RWPE1 (cell line): ENCODE measurements at regions of chr16 and their contacts with region 1.

Region 1: DNA sequence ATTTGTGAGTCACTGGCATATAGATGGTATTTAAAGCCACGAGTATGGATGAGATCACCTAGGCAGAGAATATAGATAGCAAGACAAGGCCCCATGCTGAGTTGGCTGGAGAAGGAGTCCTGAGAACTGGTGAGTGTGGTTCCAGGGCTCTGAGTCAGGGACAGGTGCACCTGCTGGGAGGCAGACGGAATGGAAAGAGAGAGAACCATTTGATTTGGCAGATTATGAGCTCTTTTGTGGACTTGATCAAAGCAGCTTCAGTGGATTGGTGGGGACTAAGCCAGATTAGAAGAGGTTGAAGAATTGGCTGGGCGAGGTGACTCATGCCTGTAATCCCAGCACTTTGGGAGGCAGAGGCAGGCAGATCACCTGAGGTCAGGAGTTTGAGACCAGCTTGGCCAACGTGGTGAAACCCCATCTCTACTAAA is 4.3 kb upstream of the C16orf92 start:
- DNase-seq: no peak
- H3K27ac ChIP-seq: no peak overlapping the region
- CTCF ChIP-seq: no peak

Region 2: DNA sequence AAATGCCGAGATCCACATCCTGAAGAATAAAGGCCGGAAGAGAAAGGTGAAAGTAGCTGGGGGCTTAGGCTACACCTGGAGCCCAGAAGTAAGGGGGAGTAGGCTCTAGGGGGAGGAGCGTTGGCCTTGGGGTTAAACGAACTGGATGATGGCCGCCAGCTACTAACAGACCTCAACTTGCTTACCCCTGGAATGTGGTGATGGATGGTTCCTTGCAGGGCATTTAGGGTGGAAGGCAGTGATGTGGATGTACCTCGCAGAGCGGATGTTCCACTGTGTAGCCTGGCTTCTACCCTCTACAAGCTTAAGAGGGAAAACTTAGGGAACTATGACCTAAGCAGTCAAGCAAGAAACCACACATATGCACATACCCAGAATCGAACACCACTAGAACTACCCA is 214.7 kb before region 1 on chr16:
- CTCF ChIA-PET with region 1: no interaction called
- POLR2A ChIA-PET with region 1: no interaction called
- DNase-seq: no peak
- H3K27ac ChIP-seq: peak overlapping the region; percentile 99
- CTCF ChIP-seq: no peak

Region 3: GRCh38 chr16:30005341-30006094 is 13.2 kb before region 1 on chr16:
- CTCF ChIA-PET with region 1: interaction called, 17 read pairs
- POLR2A ChIA-PET with region 1: no interaction called
- DNase-seq: peak; percentile 47
- H3K27ac ChIP-seq: peak overlapping the region; percentile 59
- CTCF ChIP-seq: peak; percentile 79

Region 4: DNA sequence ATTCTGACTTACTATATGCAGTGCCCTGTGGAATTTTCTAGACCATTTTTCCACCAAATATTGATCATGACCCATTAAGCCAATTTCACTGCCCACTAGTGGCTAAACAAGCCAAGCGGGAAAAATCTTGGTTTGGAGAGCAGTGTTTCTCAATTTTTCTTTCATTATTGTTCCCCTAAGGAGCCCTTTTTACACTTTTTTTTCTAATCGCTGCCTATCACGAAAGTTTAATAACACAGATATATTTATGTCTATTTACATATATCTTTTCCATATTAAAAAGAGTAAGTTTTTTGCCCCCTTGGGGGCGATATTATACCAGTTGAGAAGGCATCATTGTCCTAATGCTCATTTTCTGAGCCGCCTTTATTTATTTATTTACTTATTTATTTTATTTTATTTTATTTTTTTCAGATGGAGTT is 23.1 kb after region 1 on chr16:
- CTCF ChIA-PET with region 1: no interaction called
- POLR2A ChIA-PET with region 1: no interaction called
- DNase-seq: no peak
- H3K27ac ChIP-seq: no peak overlapping the region
- CTCF ChIP-seq: peak; percentile 46